ENCODE measurements at regions of chr17 and their contacts with region 1.

Region 1: DNA sequence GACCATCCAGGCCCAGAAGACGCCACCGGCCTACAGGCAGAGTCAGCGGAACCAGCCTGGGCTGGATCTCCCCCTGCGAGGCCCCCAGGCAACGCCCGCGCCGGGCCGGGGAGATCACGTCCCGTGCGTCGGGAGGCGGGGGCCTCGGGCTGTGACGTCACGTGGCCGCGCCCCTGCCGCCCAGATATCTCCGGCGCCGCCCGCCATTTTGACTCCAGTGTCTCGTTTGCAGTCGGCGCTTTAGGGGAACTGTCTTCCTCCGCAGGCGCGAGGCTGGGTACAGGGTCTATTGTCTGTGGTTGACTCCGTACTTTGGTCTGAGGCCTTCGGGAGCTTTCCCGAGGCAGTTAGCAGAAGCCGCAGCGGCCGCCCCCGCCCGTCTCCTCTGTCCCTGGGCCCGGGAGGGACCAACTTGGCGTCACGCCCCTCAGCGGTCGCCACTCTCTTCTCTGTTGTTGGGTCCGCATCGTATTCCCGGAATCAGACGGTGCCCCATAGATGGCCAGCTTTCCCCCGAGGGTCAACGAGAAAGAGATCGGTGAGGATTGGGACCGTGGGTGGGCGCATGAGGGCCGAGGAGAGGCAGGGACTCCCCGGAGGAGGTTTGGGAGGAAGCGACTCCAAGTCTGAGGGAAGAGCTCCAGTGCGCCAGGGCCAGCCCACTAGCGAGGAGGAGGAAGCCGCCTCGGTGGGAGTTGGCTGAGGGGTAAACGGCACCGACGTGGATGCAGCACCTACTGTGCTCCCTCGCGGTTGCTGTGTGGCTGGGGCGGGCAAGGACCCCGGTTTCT is at the start of gene WSB1:
- H3K4me3 ChIP-seq: peak within 1 kb of the TSS; percentile 75
- H3K27ac ChIP-seq: peak within 1 kb of the TSS; percentile 94
- H3K4me1 ChIP-seq: peaks cover 6% of the 10 kb centered on the region
- CTCF ChIP-seq: peak; percentile 76

Region 2: DNA sequence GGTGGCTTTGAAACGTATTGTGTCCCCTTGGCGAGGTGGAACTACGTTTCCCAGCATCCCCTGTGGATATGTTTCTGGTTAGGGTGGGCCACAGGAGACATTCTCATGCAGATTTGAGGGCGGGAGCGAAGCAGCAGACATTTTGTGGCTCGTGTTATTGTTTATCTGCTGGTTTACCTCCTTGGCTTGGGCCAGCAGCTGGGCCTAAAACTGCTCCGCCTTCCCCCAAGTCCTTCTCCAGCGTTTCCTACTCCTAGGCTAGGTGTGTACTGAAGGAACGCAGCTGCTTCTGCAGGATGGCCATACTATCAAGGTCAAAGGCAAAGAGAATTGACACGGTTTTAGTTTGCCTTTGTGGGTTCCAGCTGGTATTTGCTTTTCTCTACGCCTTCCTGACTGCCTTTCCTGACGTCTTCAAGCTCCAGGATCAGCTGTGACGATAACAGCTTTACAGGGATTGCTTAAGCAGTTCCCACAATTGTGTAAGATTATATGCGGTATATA is 17.4 kb before region 1 on chr17:
- CTCF ChIA-PET with region 1: interaction called, 5 read pairs
- POLR2A ChIA-PET with region 1: interaction called, 16 read pairs
- H3K4me3 ChIP-seq: no peak overlapping the region
- H3K27ac ChIP-seq: no peak overlapping the region
- H3K4me1 ChIP-seq: no peaks in the 10 kb centered on the region
- CTCF ChIP-seq: no peak

Region 3: GRCh38 chr17:27306276-27306835 is 12.3 kb after region 1 on chr17:
- CTCF ChIA-PET with region 1: no interaction called
- POLR2A ChIA-PET with region 1: interaction called, 21 read pairs
- H3K4me3 ChIP-seq: no peak overlapping the region
- H3K27ac ChIP-seq: no peak overlapping the region
- H3K4me1 ChIP-seq: peaks cover 4% of the 10 kb centered on the region
- CTCF ChIP-seq: no peak

Region 4: GRCh38 chr17:27323524-27324206 is 29.6 kb after region 1 on chr17:
- CTCF ChIA-PET with region 1: interaction called, 5 read pairs
- POLR2A ChIA-PET with region 1: interaction called, 26 read pairs
- H3K4me3 ChIP-seq: no peak overlapping the region
- H3K27ac ChIP-seq: no peak overlapping the region
- H3K4me1 ChIP-seq: peaks cover 3% of the 10 kb centered on the region; the same call in 1 of the 2 replicates
- CTCF ChIP-seq: no peak